ENCODE measurements at regions of chr12 and their contacts with region 1.

Region 1: GRCh38 chr12:49662998-49663843 is 39.9 kb downstream of the PRPF40B start:
- DNase-seq: peak; percentile 94
- H3K4me3 ChIP-seq: peak overlapping the region; percentile 60
- H3K27ac ChIP-seq: peak overlapping the region; percentile 86
- H3K4me1 ChIP-seq: peaks cover 75% of the 10 kb centered on the region
- CTCF ChIP-seq: no peak

Region 2: GRCh38 chr12:49588721-49589516 is 74.3 kb before region 1 on chr12:
- CTCF ChIA-PET with region 1: no interaction called
- POLR2A ChIA-PET with region 1: no interaction called
- intact Hi-C with region 1: no loop called
- DNase-seq: no peak
- H3K4me3 ChIP-seq: no peak overlapping the region
- H3K27ac ChIP-seq: no peak overlapping the region
- H3K4me1 ChIP-seq: no peaks in the 10 kb centered on the region
- CTCF ChIP-seq: no peak

Region 3: GRCh38 chr12:49623142-49623904 is 39.9 kb before region 1 on chr12 and contains the start of gene PRPF40B:
- CTCF ChIA-PET with region 1: no interaction called
- POLR2A ChIA-PET with region 1: no interaction called
- intact Hi-C with region 1: no loop called
- DNase-seq: peak; percentile 92
- H3K4me3 ChIP-seq: peak within 1 kb of the TSS; percentile 68
- H3K27ac ChIP-seq: peak within 1 kb of the TSS; percentile 82
- H3K4me1 ChIP-seq: peaks cover 30% of the 10 kb centered on the region
- CTCF ChIP-seq: peak; percentile 66
- total RNA-seq, gene PRPF40B: 11.3 and 17.0 TPM in 2 replicates

Region 4: GRCh38 chr12:49673446-49674317 is 10.5 kb after region 1 on chr12:
- CTCF ChIA-PET with region 1: interaction called, 3 read pairs
- POLR2A ChIA-PET with region 1: interaction called, 28 read pairs
- intact Hi-C with region 1: no loop called
- DNase-seq: no peak
- H3K4me3 ChIP-seq: no peak overlapping the region
- H3K27ac ChIP-seq: no peak overlapping the region
- H3K4me1 ChIP-seq: peaks cover 59% of the 10 kb centered on the region
- CTCF ChIP-seq: no peak

Region 5: GRCh38 chr12:49698619-49699545 is 35.7 kb after region 1 on chr12:
- CTCF ChIA-PET with region 1: interaction called, 11 read pairs
- POLR2A ChIA-PET with region 1: interaction called, 12 read pairs
- intact Hi-C with region 1: loop called (anchors 2 kb)
- DNase-seq: peak; percentile 88
- H3K4me3 ChIP-seq: peak overlapping the region; percentile 61
- H3K27ac ChIP-seq: peak overlapping the region; percentile 86
- H3K4me1 ChIP-seq: peaks cover 83% of the 10 kb centered on the region
- CTCF ChIP-seq: no peak

Measured in OCI-LY7 (cell line).